AG04449 (cell line): ENCODE measurements at regions of chr5 and their contacts with region 1.

Region 1: DNA sequence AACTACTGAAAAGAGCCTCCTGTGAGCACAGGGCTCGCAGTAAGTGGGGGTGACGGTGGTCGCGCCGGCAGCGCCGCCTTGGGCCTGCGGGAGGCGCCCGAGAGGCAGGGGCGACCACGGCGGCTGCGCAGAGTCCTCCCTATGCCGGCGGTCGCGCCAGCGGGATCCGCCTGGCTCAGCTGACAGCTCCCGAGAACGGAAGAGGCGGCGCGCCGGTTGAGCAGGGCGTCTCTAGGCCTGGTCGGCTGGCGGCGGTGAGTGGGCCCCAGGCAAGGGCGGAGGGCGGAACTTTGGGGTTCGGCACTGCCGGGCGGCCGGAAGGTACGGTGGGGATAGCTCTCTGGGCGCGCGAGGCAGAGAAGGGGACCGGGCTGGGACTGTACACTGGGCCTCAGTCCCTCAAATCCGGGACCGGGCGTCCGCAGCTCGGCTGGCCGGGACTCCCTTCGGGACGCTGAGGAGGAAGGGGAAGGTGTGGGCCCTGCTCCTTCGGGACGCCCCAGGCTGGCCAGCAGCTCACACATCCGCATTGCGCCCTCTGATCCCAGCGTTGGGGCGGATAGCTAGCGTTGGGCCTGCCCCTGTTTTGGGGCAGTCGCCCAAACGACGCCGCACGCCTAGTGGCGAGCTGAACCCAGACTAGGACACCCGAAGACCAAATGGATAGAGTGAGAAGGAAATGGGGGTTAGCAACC is at the start of gene RNF14:
- DNase-seq: peak; percentile 28
- H3K4me3 ChIP-seq: peak within 1 kb of the TSS; percentile 88
- CTCF ChIP-seq: peak; percentile 88

Region 2: DNA sequence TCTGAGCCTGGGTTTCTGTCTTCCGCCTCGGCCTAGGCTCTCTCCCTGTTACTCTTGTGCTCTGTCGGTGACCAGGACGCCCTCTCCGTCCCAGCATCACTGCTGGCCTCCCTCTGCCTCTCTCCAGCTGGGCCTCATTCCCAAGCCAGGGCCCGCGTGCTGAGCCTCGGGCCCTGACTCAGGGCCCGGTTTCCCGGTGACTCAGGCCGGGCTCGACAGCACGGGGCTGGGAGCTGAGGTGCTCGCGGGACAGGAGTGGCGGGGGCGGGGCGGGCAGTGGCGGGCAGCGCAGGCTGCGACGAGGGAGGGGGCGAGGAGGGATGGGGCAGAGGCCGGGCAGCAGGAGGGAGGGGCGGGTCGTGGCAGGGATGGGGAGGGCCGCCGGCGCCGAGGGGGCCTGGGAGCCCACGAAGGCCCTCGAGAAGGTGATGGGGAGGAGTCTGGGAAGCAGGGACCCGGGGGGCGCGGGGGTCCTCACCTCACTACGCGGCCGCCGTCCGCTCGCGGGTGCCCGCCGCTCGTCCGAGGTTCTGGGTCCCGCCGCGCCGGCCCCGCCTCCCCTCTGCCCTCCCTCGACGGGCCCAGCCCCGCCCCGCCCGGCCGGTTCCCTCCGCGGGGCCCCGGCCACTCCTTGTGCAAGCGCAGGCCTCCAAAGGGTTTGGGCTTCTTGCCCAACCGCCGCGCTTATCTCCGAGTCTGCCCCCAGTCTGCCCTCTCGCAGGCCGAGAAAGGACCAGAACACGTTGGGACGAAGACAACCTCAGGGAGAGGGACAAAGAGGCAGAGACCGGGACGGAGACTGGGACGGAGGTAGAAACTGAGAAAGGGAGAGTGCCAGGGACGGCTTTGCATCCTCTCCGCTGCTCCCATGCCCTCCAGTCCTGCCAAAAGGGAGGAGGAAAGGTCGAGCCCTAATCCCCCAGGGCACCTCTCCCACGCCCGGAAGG is 287.1 kb before region 1 on chr5 and contains the start of gene ARAP3:
- CTCF ChIA-PET with region 1: interaction called, 14 read pairs
- POLR2A ChIA-PET with region 1: no interaction called
- DNase-seq: peak; percentile 37
- H3K4me3 ChIP-seq: peak within 1 kb of the TSS; percentile 58
- CTCF ChIP-seq: no peak

Region 3: DNA sequence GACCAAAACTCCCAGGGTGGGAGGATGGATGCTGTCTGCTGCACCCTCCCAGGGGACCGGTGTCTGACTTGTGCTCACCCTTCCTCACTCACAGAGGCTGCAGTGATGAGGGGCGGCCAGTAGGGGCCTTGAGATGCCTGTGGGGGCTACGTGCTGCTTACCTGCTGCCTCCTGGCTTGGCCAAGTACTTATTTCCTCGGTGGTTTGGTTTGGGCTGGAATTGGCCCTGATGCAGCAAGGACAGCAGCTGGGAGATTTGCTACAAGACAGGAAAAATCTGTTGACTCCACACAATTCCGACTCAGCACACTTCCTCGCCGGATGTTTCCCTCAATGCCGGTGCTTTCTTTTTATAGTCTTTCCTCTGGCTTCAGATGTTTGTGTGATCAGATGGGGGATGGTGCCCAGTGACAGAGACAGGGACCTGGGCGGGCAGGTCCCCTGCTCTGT is 17.7 kb before region 1 on chr5:
- CTCF ChIA-PET with region 1: interaction called, 260 read pairs
- POLR2A ChIA-PET with region 1: no interaction called
- DNase-seq: no peak
- H3K4me3 ChIP-seq: no peak overlapping the region
- CTCF ChIP-seq: peak; percentile 58

Region 4: DNA sequence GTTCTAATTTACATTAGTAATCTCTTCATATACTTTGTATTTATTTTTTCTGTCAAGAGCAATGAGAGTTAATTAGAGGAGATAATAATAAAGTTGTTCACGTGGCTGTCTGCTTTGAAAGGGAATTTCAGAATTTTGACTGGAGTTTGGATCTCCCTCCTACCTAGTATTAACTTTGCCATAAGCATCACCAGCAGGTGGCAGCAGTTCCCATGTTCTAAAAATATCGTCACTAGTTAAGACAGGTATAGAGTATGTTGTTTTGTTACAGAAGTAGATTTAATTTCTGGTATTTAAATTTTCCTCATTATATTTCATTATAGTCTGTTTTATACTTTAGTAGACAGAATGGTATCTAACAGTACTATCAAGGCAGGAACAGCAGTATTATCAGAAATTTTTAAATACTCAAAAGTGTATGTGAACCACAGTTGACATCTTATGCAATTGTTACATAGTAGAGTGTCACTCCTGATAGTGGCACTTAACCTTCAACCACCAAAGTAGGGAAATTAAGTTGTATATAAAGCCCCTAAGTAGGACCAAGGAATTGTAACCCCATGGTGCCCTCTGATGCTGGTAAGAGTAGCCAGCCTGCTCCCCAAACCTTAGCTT is 23.4 kb after region 1 on chr5:
- CTCF ChIA-PET with region 1: interaction called, 23 read pairs
- POLR2A ChIA-PET with region 1: interaction called, 3 read pairs
- DNase-seq: no peak
- H3K4me3 ChIP-seq: no peak overlapping the region
- CTCF ChIP-seq: peak; percentile 67